HCT116 (cell line): ENCODE measurements at regions of chr5 and their contacts with region 1.

Region 1: DNA sequence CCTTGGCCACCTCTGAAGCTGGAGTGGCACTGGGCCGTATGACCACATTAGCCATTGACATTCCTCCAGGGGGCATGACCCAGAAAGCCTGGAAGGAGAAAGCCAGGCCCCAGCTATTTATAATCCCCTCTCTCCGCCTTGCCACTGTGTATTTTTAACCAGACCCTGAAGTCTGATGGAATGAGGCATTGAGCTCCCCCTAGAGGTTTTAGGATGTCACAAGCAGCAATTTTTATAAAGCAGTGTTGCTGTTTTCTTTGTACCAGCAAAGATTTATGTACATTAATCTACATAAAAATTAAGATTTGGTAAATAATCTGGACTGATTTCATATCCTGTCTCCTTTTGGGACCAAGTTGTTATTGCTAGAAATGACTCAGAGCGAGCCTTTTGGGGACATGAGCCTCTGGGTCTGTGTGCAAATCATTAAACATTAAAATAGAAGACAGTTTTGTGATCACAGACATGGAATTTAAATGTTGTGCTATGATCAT is 127.1 kb downstream of the TRIO start:
- DNase-seq: peak; percentile 48
- ATAC-seq: peak; percentile 30
- H3K4me3 ChIP-seq: 0 out of 4 replicates have a peak overlapping the region, but pooled peaks of 1 of the 2 experiments have one; percentile 0
- H3K27ac ChIP-seq: no peak overlapping the region
- H3K4me1 ChIP-seq: peaks cover 45 to 56% of the 10 kb centered on the region in 2 experiments
- H3K27me3 ChIP-seq: no peaks in the 10 kb centered on the region
- CTCF ChIP-seq: peak; percentile 63 to 84 (median 70); a peak in 5 of 6 replicates
- POLR2A ChIP-seq: no peak
- RAD21 ChIP-seq: peak; percentile 76

Region 2: GRCh38 chr5:13673511-13673910 is 596.7 kb before region 1 on chr5:
- CTCF ChIA-PET with region 1: no interaction called
- POLR2A ChIA-PET with region 1: no interaction called
- RAD21 ChIA-PET with region 1: no interaction called
- intact Hi-C with region 1: no loop called
- DNase-seq: no peak
- ATAC-seq: no peak
- H3K4me3 ChIP-seq: no peak overlapping the region
- H3K27ac ChIP-seq: no peak overlapping the region
- H3K4me1 ChIP-seq: no peaks in the 10 kb centered on the region
- H3K27me3 ChIP-seq: no peaks in the 10 kb centered on the region
- CTCF ChIP-seq: no peak
- POLR2A ChIP-seq: no peak
- RAD21 ChIP-seq: no peak

Region 3: GRCh38 chr5:13987843-13988464 is 282.3 kb before region 1 on chr5:
- CTCF ChIA-PET with region 1: interaction called, 3 read pairs
- POLR2A ChIA-PET with region 1: no interaction called
- RAD21 ChIA-PET with region 1: no interaction called
- intact Hi-C with region 1: loop called (anchors 1 kb)
- DNase-seq: peak; percentile 42
- ATAC-seq: peak; percentile 64
- H3K4me3 ChIP-seq: no peak overlapping the region
- H3K27ac ChIP-seq: no peak overlapping the region
- H3K4me1 ChIP-seq: peaks cover 7 to 14% of the 10 kb centered on the region in 2 experiments
- H3K27me3 ChIP-seq: no peaks in the 10 kb centered on the region
- CTCF ChIP-seq: peak; percentile 72 to 92 (median 75)
- POLR2A ChIP-seq: no peak
- RAD21 ChIP-seq: peak; percentile 92

Region 4: DNA sequence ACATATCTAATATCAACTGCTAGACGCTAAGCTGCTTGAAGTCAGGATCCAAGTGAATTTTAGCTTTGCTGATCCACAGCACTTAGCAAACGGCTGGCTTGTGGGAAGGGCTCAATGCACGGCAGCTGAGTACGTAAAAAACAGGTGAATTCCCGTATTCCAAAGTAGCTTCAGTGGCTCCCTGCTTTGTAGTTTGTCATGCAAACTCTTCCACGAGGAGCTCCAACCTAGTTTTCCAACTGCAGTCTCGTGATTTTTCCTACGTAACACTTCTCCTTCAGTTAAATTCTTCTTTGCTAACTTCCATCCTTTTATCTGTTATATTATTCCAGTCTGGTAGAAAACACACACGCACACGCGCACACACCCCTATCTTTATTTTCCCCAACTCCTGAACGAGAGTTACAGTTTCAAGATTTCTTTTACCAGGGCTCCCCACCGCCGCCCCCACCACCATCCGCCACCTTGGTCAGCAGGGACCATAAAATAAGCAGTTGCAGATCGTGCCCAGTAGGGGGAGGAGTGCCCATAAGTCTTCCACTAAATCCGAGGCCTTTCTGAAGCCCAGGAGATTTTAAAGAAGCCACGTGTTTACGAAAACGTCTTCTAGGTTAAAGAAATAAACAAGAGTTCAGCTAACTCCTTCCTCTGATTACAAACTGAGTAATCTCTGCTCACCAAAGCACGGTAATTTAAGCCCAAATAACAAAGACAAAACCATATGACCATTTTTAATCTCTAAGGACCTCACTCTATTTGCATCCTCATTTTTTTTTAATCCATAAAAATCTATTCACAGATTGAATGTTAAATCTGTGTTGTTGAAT is 161.9 kb before region 1 on chr5:
- CTCF ChIA-PET with region 1: interaction called, 4 read pairs
- POLR2A ChIA-PET with region 1: no interaction called
- RAD21 ChIA-PET with region 1: no interaction called
- intact Hi-C with region 1: loop called (anchors 1 kb)
- DNase-seq: peak; percentile 71
- ATAC-seq: peak; percentile 85
- H3K4me3 ChIP-seq: peak overlapping the region in 1 of 2 experiments; percentile 27; a peak in 2 of 4 replicates
- H3K27ac ChIP-seq: no peak overlapping the region
- H3K4me1 ChIP-seq: peaks cover 18 to 40% of the 10 kb centered on the region in 2 experiments
- H3K27me3 ChIP-seq: no peaks in the 10 kb centered on the region
- CTCF ChIP-seq: peak; percentile 57 to 80 (median 73); a peak in 5 of 6 replicates
- POLR2A ChIP-seq: no peak
- RAD21 ChIP-seq: peak; percentile 82

Region 5: DNA sequence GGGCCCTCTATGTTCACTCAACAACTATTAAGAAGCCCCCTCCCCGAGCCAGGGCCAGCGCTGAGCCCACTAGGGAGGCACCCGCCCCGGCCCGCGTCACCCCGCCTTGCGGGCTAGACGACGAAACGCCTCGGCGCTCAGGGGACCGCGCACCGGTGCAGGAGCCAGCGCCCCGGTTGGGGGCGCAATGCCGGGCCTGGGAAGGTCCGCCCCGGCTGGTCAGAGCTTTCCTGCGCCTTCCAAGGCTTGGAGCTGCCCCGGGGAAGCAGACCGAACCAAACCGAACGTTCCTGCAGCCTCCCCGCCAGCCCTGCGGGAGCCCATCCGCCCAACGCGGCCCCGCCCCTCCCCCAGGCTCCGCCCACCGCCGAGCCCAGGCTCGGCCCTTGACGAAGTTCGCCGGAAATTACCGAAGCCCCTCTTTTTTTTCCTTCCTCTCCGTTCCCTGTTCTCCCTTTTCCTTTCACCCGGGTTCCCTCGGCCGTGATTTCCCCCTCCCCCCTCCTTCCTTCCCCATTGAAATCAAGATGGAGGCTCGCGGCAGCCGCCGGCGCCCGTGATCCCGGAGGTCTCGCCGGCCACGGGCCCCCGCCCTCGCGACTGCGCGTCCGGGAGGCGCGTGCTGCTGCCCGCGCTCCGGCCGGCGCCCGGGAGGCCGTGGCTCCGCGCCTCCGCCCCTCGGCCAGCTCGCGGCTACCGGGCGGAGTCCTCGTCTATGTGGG is 127.3 kb before region 1 on chr5 and contains the start of gene TRIO:
- CTCF ChIA-PET with region 1: interaction called, 3 read pairs
- POLR2A ChIA-PET with region 1: no interaction called
- RAD21 ChIA-PET with region 1: no interaction called
- intact Hi-C with region 1: loop called (anchors 2 kb)
- DNase-seq: peak; percentile 77
- ATAC-seq: peak; percentile 78
- H3K4me3 ChIP-seq: peak within 1 kb of the TSS; percentile 72 to 97
- H3K27ac ChIP-seq: peak within 1 kb of the TSS; percentile 94
- H3K4me1 ChIP-seq: peaks cover 12 to 33% of the 10 kb centered on the region in 2 experiments
- H3K27me3 ChIP-seq: no peaks in the 10 kb centered on the region; the same call in 1 of the 2 replicates
- CTCF ChIP-seq: peak in 2 of 3 experiments; percentile 48 to 55; a peak in 4 of 6 replicates
- POLR2A ChIP-seq: peak; percentile 74
- RAD21 ChIP-seq: peak; percentile 31; the same call in 1 of the 2 replicates
- total RNA-seq, gene TRIO: 68.4 TPM